Left ventricle myocardium superior (tissue), 1 donor: ENCODE measurements at regions of chr10 and their contacts with region 1.

Region 1: GRCh38 chr10:92240289-92241157 is 50.4 kb downstream of the CPEB3 start:
- DNase-seq: peak; percentile 39
- ATAC-seq: peak; percentile 79

Region 2: DNA sequence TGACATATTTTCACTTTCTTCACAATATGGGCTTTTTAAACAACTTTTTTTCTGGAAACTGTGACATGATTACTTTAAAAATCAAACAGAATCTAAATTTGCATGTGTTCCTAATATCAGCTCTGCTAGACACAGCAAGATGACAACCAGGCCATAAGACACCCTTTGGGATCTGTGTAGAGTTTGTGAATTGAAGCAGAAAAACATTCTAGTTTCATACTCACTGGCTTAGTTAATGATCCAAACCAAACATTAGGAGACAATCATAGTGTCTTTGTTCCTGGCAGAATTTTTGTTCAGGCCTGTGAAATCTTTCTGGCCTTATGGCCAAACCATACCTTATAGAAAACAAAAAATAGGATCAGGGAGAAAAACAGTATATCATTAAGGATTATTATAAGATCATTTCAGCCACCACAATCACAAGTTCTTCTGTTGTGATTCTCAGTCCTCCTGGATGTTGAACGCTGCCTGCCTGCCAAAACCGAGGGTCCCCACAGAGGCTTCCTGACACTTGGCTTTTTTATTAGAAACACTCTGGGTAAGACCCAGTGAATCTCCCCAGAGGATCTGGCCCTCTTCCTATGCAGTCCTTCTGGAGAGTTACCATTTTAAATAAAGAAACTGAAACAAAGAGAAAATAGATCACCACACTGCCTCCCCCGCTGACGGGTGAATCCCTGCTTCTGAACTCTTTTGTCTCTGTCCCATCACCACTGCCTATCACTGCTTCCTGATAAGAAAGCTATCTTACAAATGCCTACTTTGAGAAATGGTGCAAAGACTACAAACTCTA is 528.4 kb before region 1 on chr10:
- intact Hi-C with region 1: no loop called
- DNase-seq: no peak
- ATAC-seq: no peak

Region 3: GRCh38 chr10:92087750-92088395 is 152.7 kb before region 1 on chr10:
- intact Hi-C with region 1: loop called (anchors 10 kb)
- DNase-seq: peak; percentile 47
- ATAC-seq: peak; percentile 91

Region 4: GRCh38 chr10:92290837-92291615 is 50.5 kb after region 1 on chr10 and contains the starts of genes CPEB3 and MARCHF5:
- intact Hi-C with region 1: loop called (anchors 10 kb)
- DNase-seq: peak; percentile 98
- ATAC-seq: peak; percentile 99
- total RNA-seq, gene CPEB3: 18.0 TPM
- total RNA-seq, gene MARCHF5: 32.9 TPM

Region 5: GRCh38 chr10:92305133-92306072 is 64.9 kb after region 1 on chr10:
- intact Hi-C with region 1: no loop called
- DNase-seq: no peak
- ATAC-seq: no peak